ENCODE measurements at regions of chr3 and their contacts with region 1.

Region 1: DNA sequence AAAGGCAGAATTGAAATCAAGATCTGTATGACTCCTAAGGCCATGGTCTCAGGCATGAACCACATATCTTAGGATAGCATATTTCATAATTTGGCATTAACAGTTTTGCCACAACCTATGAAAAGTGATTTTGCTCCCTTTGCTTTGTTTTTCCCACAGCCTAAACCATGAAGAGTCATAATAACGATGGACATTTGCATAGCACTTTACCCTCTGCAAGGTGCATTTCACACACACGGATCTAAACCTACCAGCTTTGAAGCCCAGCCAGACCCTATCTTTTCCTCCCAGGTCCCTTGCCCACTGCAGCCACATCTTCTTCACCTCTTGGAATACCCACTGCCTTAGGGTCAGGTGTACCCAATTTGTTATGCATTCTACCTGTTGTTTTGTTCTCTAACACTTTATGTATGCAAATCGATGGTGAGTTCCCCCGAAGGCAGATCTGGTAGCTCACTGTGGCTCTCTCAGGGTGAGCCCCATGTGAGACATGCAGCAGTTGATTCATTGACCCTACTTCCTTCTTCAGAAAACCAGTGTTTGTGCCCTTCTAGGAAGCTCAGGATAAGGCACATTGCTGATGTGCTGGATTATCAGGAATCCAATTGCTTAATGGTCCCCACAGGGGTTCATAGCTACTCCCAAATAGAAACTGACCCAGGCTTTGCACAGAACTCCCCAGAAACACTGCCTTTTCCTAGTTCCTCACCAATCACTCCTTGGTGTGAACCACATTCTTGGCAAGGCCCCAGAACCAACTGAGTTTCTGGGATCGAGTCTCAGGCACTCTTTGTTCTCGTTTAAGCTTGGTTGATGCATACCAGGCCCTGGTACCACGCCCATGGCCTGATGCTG is 8.7 kb downstream of the ARHGAP31 start:
- DNase-seq: no peak
- ATAC-seq: peak; percentile 27
- H3K4me3 Mint-ChIP-seq: no peak overlapping the region
- H3K27ac Mint-ChIP-seq: no peak overlapping the region
- H3K4me1 Mint-ChIP-seq: peaks cover 32% of the 10 kb centered on the region
- H3K27me3 Mint-ChIP-seq: no peaks in the 10 kb centered on the region
- CTCF ChIP-seq: no peak

Region 2: GRCh38 chr3:119322835-119323722 is 20.2 kb after region 1 on chr3:
- CTCF ChIA-PET with region 1: interaction called, 11 read pairs
- POLR2A ChIA-PET with region 1: interaction called, 10 read pairs
- intact Hi-C with region 1: no loop called
- DNase-seq: peak; percentile 96
- ATAC-seq: peak; percentile 91
- H3K4me3 Mint-ChIP-seq: peak overlapping the region; percentile 83
- H3K27ac Mint-ChIP-seq: peak overlapping the region; percentile 91
- H3K4me1 Mint-ChIP-seq: peaks cover 48% of the 10 kb centered on the region
- H3K27me3 Mint-ChIP-seq: no peaks in the 10 kb centered on the region
- CTCF ChIP-seq: no peak